ENCODE measurements at regions of chr19 and their contacts with region 1.

Region 1: GRCh38 chr19:8513687-8514504 is at the start of gene ZNF414:
- DNase-seq: peak; percentile 94 to 99 (median 97)
- H3K4me3 ChIP-seq: peak within 1 kb of the TSS; percentile 34 to 82
- H3K4me3 Mint-ChIP-seq: peak within 1 kb of the TSS; percentile 87 to 97 (median 94)
- H3K27ac ChIP-seq: peak within 1 kb of the TSS; percentile 93
- H3K27ac Mint-ChIP-seq: peak within 1 kb of the TSS; percentile 96 to 99 (median 99)
- H3K4me1 ChIP-seq: peaks cover 68% of the 10 kb centered on the region
- H3K4me1 Mint-ChIP-seq: peaks cover 30 to 67% (median 50%) of the 10 kb centered on the region in 4 donors
- H3K27me3 ChIP-seq: no peaks in the 10 kb centered on the region
- H3K27me3 Mint-ChIP-seq: no peaks in the 10 kb centered on the region
- total RNA-seq, gene ZNF414: 45.1 to 50.4 TPM

Region 2: DNA sequence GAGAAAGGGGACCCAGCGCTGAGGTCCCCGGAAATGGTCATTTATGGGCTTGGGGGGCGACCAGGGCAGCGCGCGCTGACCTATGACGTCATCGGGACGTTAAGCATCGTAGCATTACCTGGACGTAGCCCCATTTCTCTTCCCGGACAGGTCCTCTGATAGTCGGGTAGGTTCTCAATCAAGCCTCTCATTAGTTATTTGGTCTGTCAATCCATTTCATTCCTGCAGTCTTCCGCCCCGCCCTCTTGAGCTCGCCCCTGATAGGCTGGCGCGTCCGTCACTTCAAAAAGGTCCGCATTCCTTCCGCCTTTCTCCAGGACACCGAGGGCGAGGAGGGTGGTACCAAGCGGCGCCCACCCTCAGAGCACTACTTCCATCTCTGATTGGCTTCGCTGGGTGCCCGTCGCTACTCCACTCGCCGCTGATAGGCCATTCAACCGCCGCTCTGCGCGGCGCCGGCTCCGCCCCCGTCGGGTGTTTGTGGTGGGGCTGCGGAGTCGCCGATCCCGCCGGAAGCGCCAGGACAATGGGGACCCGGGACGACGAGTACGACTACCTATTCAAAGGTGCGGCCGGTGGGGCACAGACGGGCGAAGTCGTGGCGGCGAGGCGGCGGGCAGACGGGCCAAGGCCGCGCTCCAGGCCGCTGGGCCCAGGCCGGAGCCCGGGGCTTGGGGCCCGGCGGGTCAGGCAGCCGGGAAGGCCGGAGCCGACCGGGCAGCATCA is 123.8 kb before region 1 on chr19 and contains the start of gene RAB11B:
- CTCF ChIA-PET with region 1: no interaction called
- POLR2A ChIA-PET with region 1: interaction called, 5 read pairs
- intact Hi-C with region 1: loop called (anchors 5 kb)
- DNase-seq: peak; percentile 96 to 99 (median 99)
- H3K4me3 ChIP-seq: peak within 1 kb of the TSS; percentile 65 to 81
- H3K4me3 Mint-ChIP-seq: peak within 1 kb of the TSS; percentile 89 to 97 (median 93)
- H3K27ac ChIP-seq: peak within 1 kb of the TSS; percentile 96
- H3K27ac Mint-ChIP-seq: peak within 1 kb of the TSS; percentile 91 to 99 (median 97)
- H3K4me1 ChIP-seq: peaks cover 22% of the 10 kb centered on the region
- H3K4me1 Mint-ChIP-seq: peaks cover 9 to 37% (median 29%) of the 10 kb centered on the region in 4 donors
- H3K27me3 ChIP-seq: no peaks in the 10 kb centered on the region
- H3K27me3 Mint-ChIP-seq: no peaks in the 10 kb centered on the region
- total RNA-seq, gene RAB11B: 107 to 109 TPM

Region 3: DNA sequence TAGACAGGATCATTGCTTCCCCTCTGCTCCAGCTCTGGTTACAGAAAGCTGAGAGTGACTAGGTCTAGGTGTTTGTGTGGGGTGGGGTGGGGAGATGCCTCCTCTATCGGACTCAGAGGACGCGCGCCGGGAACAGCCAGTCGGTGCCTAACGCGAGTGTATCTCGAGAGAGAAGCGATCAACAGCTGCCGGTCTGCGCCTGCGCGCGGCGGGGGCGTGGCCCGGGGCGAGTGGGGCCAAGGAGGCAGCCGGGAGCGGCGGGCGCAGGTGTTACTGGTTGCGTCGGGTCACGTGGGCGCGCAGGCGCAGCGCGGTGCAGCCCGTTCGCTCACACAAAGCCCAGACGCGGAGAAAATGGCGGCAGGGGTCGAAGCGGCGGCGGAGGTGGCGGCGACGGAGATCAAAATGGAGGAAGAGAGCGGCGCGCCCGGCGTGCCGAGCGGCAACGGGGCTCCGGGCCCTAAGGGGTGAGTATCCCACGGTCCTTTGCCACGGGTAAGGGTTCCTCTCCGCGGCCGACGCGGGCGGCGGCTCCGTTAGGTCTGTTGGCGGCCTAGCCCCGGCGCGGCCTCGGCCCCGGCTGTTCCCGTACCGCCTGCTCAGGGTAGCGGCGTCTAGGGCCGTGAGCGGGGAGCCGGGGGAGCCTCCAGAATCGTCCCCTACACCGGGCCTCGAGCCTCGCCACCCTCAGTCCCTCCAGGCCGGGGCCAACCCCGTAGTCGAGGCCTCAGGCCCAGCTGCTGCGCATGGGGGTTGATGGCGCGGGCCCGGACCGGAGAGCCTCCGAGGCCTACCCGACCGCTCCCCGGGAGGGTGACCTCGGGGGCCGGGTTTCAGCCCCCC is 69.0 kb before region 1 on chr19 and contains the start of gene HNRNPM:
- CTCF ChIA-PET with region 1: interaction called, 5 read pairs
- POLR2A ChIA-PET with region 1: interaction called, 30 read pairs
- intact Hi-C with region 1: loop called (anchors 2 kb)
- DNase-seq: peak; percentile 99 to 100 (median 100)
- H3K4me3 ChIP-seq: peak within 1 kb of the TSS; percentile 26 to 85
- H3K4me3 Mint-ChIP-seq: peak within 1 kb of the TSS; percentile 95 to 99 (median 97)
- H3K27ac ChIP-seq: peak within 1 kb of the TSS; percentile 99
- H3K27ac Mint-ChIP-seq: peak within 1 kb of the TSS; percentile 91 to 99 (median 98)
- H3K4me1 ChIP-seq: peaks cover 40% of the 10 kb centered on the region
- H3K4me1 Mint-ChIP-seq: peaks cover 28 to 51% (median 36%) of the 10 kb centered on the region in 4 donors
- H3K27me3 ChIP-seq: no peaks in the 10 kb centered on the region
- H3K27me3 Mint-ChIP-seq: no peaks in the 10 kb centered on the region
- total RNA-seq, gene HNRNPM: 197 to 199 TPM

Region 4: GRCh38 chr19:8494158-8494557 is 19.7 kb before region 1 on chr19:
- CTCF ChIA-PET with region 1: interaction called, 4 read pairs
- POLR2A ChIA-PET with region 1: interaction called, 55 read pairs
- intact Hi-C with region 1: no loop called
- DNase-seq: no peak
- H3K4me3 ChIP-seq: no peak overlapping the region
- H3K4me3 Mint-ChIP-seq: no peak overlapping the region
- H3K27ac ChIP-seq: no peak overlapping the region
- H3K27ac Mint-ChIP-seq: peak overlapping the region; percentile 38 to 84 (median 64)
- H3K4me1 ChIP-seq: peaks cover 8% of the 10 kb centered on the region
- H3K4me1 Mint-ChIP-seq: peaks cover 4 to 17% (median 4%) of the 10 kb centered on the region in 4 donors
- H3K27me3 ChIP-seq: no peaks in the 10 kb centered on the region
- H3K27me3 Mint-ChIP-seq: no peaks in the 10 kb centered on the region

Region 5: GRCh38 chr19:8552810-8553209 is 38.9 kb after region 1 on chr19:
- CTCF ChIA-PET with region 1: no interaction called
- POLR2A ChIA-PET with region 1: interaction called, 10 read pairs
- intact Hi-C with region 1: no loop called
- DNase-seq: no peak
- H3K4me3 ChIP-seq: no peak overlapping the region
- H3K4me3 Mint-ChIP-seq: no peak overlapping the region
- H3K27ac ChIP-seq: no peak overlapping the region
- H3K27ac Mint-ChIP-seq: peak overlapping the region in 6 of 7 donors; percentile 0 to 81 (median 44)
- H3K4me1 ChIP-seq: peaks cover 7% of the 10 kb centered on the region
- H3K4me1 Mint-ChIP-seq: peaks cover 6 to 20% (median 11%) of the 10 kb centered on the region in 4 donors
- H3K27me3 ChIP-seq: no peaks in the 10 kb centered on the region
- H3K27me3 Mint-ChIP-seq: no peaks in the 10 kb centered on the region

Region 6: DNA sequence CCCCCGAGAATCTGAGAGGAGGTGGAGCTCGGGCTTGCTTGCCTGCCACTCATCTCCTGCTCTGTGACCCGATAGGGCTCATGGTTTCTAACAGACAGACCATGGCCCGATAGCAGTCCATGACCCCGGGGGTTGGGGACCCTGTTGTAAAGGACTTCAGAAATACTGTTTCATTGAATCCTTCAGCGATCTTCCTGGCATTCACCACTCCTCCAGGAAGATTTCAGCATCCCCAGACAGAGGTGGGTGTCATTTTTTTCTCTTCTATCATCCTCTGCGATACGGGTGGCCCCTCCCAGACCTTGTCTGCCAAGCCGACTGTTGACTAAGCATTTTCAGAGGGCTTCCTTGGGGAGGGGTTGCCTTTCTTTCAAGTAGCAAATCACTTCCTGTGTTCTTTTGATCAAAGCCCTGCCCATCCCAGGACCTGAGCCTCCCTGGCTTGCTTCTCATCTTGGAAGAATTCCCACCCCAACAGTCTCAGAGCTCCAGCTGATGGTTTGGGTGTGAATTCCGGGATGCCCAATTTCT is 61.6 kb after region 1 on chr19:
- CTCF ChIA-PET with region 1: interaction called, 144 read pairs
- POLR2A ChIA-PET with region 1: interaction called, 461 read pairs
- intact Hi-C with region 1: loop called (anchors 2 kb)
- DNase-seq: peak; percentile 61 to 82 (median 72)
- H3K4me3 ChIP-seq: peak overlapping the region; percentile 78 to 93
- H3K4me3 Mint-ChIP-seq: peak overlapping the region; percentile 91 to 99 (median 98)
- H3K27ac ChIP-seq: peak overlapping the region; percentile 58
- H3K27ac Mint-ChIP-seq: peak overlapping the region; percentile 92 to 99 (median 94)
- H3K4me1 ChIP-seq: peaks cover 80% of the 10 kb centered on the region
- H3K4me1 Mint-ChIP-seq: peaks cover 40 to 97% (median 63%) of the 10 kb centered on the region in 4 donors
- H3K27me3 ChIP-seq: no peaks in the 10 kb centered on the region
- H3K27me3 Mint-ChIP-seq: no peaks in the 10 kb centered on the region

Measured in CD4-positive, alpha-beta memory T cell (primary cell).